ENCODE measurements at regions of chr1 and their contacts with region 1.

Region 1: GRCh38 chr1:227486559-227486958 is 76.8 kb upstream of the ZNF678 start:
- DNase-seq: no peak
- H3K4me3 Mint-ChIP-seq: no peak overlapping the region
- H3K27ac Mint-ChIP-seq: no peak overlapping the region
- H3K4me1 Mint-ChIP-seq: no peaks in the 10 kb centered on the region
- H3K27me3 Mint-ChIP-seq: peaks cover 10% of the 10 kb centered on the region

Region 2: GRCh38 chr1:227934476-227935313 is 448.1 kb after region 1 on chr1:
- intact Hi-C with region 1: no loop called
- DNase-seq: no peak
- H3K4me3 Mint-ChIP-seq: no peak overlapping the region
- H3K27ac Mint-ChIP-seq: peak overlapping the region; percentile 28
- H3K4me1 Mint-ChIP-seq: peaks cover 3% of the 10 kb centered on the region
- H3K27me3 Mint-ChIP-seq: peaks cover 7% of the 10 kb centered on the region

Region 3: GRCh38 chr1:227954163-227954850 is 467.7 kb after region 1 on chr1:
- intact Hi-C with region 1: loop called (anchors 2 kb)
- DNase-seq: no peak
- H3K4me3 Mint-ChIP-seq: no peak overlapping the region
- H3K27ac Mint-ChIP-seq: no peak overlapping the region
- H3K4me1 Mint-ChIP-seq: no peaks in the 10 kb centered on the region
- H3K27me3 Mint-ChIP-seq: peaks cover 35% of the 10 kb centered on the region

Measured in activated T-helper 2 cell treated with anti-CD3 and anti-CD28 coated beads, Interferon-gamma antibody, Interleukin-2, Interleukin-4, amounts not matched to agents 10 μg/mL and 5 μg/mL and 100 μg/mL, durations not matched to agents 14 hours and 24 hours and 36 hours (primary cell).